ENCODE measurements at regions of chr17 and their contacts with region 1.

Region 1: DNA sequence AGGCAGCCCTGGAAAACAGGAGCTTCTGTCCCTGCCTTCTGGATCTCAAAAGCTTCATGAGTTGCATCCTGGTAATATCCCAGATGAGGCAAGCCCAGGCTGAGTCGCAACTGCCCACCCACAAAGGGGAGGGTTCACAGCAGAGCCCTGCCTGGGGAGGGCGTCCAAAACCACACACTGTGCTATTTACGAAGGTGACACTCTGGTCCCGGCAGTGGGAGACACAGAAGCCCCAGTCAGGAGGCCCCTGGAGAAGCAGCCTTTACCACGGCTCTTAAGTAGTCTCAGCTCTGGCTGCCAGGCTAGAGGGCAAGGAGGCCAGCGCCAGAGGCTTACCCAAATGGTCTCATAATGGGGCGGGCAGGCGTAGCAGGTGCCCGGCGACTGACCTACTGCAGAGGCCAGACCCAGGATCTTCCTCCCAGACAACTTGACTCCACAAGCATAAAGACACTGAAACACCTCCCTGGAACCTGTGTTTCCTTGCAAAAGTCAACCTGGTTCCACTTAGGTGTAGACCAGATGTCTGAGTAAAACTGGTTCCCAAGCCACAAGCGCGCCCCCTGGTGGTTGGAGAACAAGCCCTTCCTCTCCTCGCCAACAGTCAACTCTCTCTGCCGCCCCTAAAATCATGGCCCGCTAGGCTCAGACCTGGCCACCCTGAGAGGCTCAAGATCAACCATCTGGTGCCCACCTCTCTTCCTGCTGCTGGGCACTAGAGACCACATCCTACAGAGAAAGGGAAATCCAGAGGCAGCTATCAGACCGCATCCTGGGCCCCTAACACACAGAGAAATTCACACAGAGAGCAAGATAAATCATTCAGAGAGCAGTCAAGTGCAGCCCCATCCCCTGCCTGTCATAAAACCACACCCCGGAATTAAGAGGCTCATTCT is 5.2 kb downstream of the AXIN2 start:
- DNase-seq: peak in 1 of 2 donors; percentile 88
- H3K4me3 ChIP-seq: peak overlapping the region in 1 of 2 donors; percentile 37
- H3K27ac ChIP-seq: peak overlapping the region in 1 of 2 donors; percentile 52
- H3K4me1 ChIP-seq: peaks cover 15 to 31% of the 10 kb centered on the region in 2 donors
- H3K27me3 ChIP-seq: no peaks in the 10 kb centered on the region
- CTCF ChIP-seq: peak; percentile 67 to 85 (median 78)

Region 2: DNA sequence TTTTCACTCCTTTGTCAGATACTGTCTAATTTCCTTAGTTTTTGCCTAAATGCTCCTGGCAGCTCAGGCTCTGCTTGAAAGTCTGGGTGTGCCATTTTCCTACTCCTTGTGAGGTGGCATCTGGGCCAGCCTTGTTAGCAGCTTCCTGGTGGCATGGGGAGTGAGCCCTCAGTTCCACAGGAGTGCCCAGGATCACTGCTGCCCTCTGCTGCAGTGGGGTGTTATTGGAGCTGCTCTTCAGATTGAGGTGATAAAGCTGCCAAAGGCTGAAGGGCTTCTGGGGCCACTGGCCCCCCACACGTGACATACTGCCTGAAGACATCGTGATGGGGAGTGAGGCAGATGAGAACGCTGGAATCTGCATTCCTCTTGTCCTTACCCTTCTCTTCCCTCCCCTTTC is 1022.1 kb before region 1 on chr17:
- intact Hi-C with region 1: no loop called
- DNase-seq: no peak
- H3K4me3 ChIP-seq: no peak overlapping the region
- H3K27ac ChIP-seq: no peak overlapping the region
- H3K4me1 ChIP-seq: no peaks in the 10 kb centered on the region
- H3K27me3 ChIP-seq: no peaks in the 10 kb centered on the region
- CTCF ChIP-seq: no peak

Region 3: GRCh38 chr17:65231662-65232335 is 324.5 kb before region 1 on chr17:
- intact Hi-C with region 1: loop called (anchors 5 kb)
- DNase-seq: peak in 1 of 2 donors; percentile 70
- H3K4me3 ChIP-seq: no peak overlapping the region
- H3K27ac ChIP-seq: no peak overlapping the region
- H3K4me1 ChIP-seq: no peaks in the 10 kb centered on the region
- H3K27me3 ChIP-seq: no peaks in the 10 kb centered on the region
- CTCF ChIP-seq: peak; percentile 59 to 74 (median 59)

Region 4: GRCh38 chr17:65294179-65294720 is 262.0 kb before region 1 on chr17:
- intact Hi-C with region 1: loop called (anchors 2 kb)
- DNase-seq: peak in 1 of 2 donors; percentile 71
- H3K4me3 ChIP-seq: no peak overlapping the region
- H3K27ac ChIP-seq: no peak overlapping the region
- H3K4me1 ChIP-seq: peaks cover 0 to 3% of the 10 kb centered on the region in 2 donors
- H3K27me3 ChIP-seq: no peaks in the 10 kb centered on the region
- CTCF ChIP-seq: peak; percentile 64 to 84 (median 69)

Region 5: GRCh38 chr17:65418628-65419027 is 137.6 kb before region 1 on chr17:
- intact Hi-C with region 1: loop called (anchors 2 kb)
- DNase-seq: no peak
- H3K4me3 ChIP-seq: no peak overlapping the region
- H3K27ac ChIP-seq: no peak overlapping the region
- H3K4me1 ChIP-seq: peaks cover 0 to 8% of the 10 kb centered on the region in 2 donors
- H3K27me3 ChIP-seq: no peaks in the 10 kb centered on the region
- CTCF ChIP-seq: peak in 1 of 3 experiments; percentile 19

Region 6: GRCh38 chr17:65455972-65456343 is 100.3 kb before region 1 on chr17:
- intact Hi-C with region 1: loop called (anchors 2 kb)
- DNase-seq: no peak
- H3K4me3 ChIP-seq: no peak overlapping the region
- H3K27ac ChIP-seq: no peak overlapping the region
- H3K4me1 ChIP-seq: peaks cover 0 to 16% of the 10 kb centered on the region in 2 donors
- H3K27me3 ChIP-seq: no peaks in the 10 kb centered on the region
- CTCF ChIP-seq: peak in 2 of 3 experiments; percentile 41 to 60

Region 7: GRCh38 chr17:65537845-65538674 is 18.2 kb before region 1 on chr17:
- intact Hi-C with region 1: loop called (anchors 2 kb)
- DNase-seq: no peak
- H3K4me3 ChIP-seq: no peak overlapping the region
- H3K27ac ChIP-seq: no peak overlapping the region
- H3K4me1 ChIP-seq: peaks cover 0 to 15% of the 10 kb centered on the region in 2 donors
- H3K27me3 ChIP-seq: no peaks in the 10 kb centered on the region
- CTCF ChIP-seq: no peak

Region 8: DNA sequence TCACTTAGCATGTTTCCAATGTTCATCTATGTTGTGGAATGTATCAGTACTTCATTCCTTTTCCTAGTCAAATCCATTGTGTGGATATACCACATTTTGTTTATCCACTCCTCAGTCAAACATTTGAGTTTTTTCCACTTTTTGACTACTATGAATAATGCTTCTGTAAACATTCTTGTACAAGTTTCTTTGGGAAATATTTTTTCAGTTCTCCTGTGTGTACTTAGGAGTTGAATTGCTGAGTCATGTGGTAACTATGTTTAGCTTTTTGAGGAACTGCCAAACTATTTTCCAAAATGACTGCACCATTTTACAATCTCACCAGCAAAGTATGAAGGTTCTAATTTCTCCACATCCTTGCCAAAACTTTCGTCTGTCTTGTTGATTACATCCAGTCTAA is 228.8 kb after region 1 on chr17:
- intact Hi-C with region 1: loop called (anchors 5 kb)
- DNase-seq: no peak
- H3K4me3 ChIP-seq: no peak overlapping the region
- H3K27ac ChIP-seq: peak overlapping the region; percentile 52 to 61
- H3K4me1 ChIP-seq: peaks cover 6 to 15% of the 10 kb centered on the region in 2 donors
- H3K27me3 ChIP-seq: no peaks in the 10 kb centered on the region
- CTCF ChIP-seq: no peak

Measured in ascending aorta (tissue), 2 donors.